A673 (cell line): ENCODE measurements at regions of chr11 and their contacts with region 1.

Region 1: DNA sequence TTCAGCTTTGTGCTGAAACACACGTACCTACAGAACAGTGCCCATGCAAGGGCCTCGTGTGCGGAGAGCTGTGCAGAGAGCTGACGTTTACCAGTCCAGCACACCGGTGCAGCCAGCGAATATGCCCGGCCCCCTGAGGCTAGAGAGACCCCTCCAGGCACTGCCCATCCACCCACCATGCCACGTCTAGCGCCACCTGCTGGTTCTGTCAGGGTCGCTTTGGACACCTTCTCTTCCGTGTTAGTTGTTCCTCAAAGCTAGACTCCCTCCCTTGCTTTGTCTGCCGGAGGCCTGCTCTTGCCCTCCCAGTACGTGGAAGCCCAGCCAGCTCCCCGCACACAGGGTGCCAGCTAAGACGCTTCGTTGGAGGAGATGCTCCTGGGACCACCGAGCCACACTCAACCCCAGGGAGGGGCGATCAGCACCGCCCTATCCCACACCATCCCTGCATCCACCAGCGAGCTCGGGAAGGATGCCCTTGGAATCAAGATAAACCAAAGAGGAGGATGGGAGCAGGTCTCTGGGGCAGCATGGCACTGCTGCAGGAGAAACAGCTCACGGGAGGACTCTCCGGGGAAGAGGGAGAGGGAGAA is 43.4 kb downstream of the CPT1A start:
- DNase-seq: peak; percentile 54
- H3K4me3 ChIP-seq: no peak overlapping the region
- H3K27ac ChIP-seq: no peak overlapping the region
- H3K4me1 ChIP-seq: no peaks in the 10 kb centered on the region
- H3K27me3 ChIP-seq: no peaks in the 10 kb centered on the region
- CTCF ChIP-seq: peak; percentile 90

Region 2: GRCh38 chr11:67656278-67656922 is 1141.9 kb before region 1 on chr11:
- CTCF ChIA-PET with region 1: no interaction called
- POLR2A ChIA-PET with region 1: interaction called, 11 read pairs
- intact Hi-C with region 1: no loop called
- DNase-seq: no peak
- H3K4me3 ChIP-seq: no peak overlapping the region
- H3K27ac ChIP-seq: no peak overlapping the region
- H3K4me1 ChIP-seq: no peaks in the 10 kb centered on the region
- H3K27me3 ChIP-seq: no peaks in the 10 kb centered on the region
- CTCF ChIP-seq: no peak

Region 3: DNA sequence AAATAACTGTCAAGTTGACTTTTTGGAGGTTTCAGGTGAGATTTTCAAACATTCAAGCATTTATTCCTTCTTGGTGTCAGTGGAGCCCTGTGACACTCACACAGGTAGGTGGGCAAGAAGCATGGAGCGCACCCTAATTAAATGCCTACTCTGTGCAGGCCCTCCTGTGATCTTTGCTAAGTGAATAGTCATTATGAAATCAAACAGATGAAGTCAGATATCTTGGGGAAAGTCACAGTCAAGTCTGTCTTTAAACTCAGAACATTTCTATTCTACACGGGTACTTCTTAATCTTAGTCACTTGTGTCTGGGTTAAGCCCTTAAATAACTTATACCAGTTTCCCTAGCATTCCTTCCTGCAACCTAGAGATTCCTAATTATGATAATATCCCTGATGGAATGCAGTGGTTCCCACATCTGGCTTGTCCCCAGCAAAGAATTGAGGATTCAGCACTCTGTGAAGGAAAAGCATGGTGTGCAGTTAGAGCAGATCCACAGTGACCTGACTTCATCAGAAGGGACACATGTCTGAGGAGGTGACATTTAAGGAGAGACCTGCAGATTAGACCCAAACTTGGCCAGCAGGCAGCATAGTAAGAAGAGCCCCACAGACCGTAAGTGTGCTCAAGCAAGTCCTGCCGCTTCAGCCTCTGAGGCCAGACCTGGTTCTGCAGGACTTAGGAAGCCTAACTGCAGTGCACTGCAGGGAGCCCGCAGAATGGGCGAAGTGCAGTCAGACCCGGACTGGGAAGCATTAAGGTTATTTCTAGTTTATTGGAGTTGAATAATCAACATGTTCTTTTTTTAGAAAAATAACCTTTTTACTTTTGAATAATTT is 199.3 kb before region 1 on chr11:
- CTCF ChIA-PET with region 1: no interaction called
- POLR2A ChIA-PET with region 1: no interaction called
- intact Hi-C with region 1: no loop called
- DNase-seq: no peak
- H3K4me3 ChIP-seq: no peak overlapping the region
- H3K27ac ChIP-seq: no peak overlapping the region
- H3K4me1 ChIP-seq: no peaks in the 10 kb centered on the region
- H3K27me3 ChIP-seq: no peaks in the 10 kb centered on the region
- CTCF ChIP-seq: no peak